ENCODE measurements at regions of chr1 and their contacts with region 1.

Region 1: DNA sequence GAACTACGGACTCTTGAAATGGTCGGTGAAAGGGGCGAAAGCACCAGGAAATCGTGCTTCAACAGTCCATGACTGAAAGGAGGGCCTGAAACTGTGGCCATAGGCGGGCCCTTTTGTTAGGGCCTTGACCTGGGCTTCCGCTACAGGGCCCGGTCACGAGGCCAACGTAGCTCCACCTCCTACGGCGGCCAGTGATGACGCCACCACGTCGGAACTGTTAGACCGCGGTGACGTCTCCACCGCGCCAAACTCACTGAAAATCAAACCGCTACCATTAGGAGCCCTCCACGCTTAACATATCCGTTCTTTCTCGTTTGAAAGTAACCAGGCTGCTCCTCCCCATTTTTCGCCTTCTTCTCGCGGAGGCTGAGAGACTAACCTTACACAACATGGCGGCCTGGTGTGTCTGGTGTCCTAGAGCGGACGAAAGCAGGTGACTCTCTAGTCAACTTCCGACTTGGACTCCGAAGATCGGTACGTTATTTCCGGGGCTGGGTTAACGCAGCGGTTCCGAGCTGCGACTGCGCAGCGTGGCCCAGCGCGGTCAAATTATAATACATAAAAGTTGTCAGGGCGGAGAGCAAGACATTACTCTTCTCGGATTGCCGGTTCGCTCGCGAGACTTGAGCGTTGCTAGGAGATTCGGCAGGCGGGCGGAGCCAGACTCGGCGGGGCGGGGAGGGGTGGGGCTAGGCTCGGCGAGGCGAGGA is 376 bp upstream of the CACYBP start:
- DNase-seq: peak; percentile 100
- H3K4me3 ChIP-seq: peak overlapping the region in 2 of 3 experiments; percentile 67 to 95
- H3K27ac ChIP-seq: peak overlapping the region; percentile 90
- H3K4me1 ChIP-seq: peaks cover 38% of the 10 kb centered on the region
- H3K27me3 ChIP-seq: no peaks in the 10 kb centered on the region
- CTCF ChIP-seq: no peak
- POLR2A ChIP-seq: peak; percentile 91

Region 2: DNA sequence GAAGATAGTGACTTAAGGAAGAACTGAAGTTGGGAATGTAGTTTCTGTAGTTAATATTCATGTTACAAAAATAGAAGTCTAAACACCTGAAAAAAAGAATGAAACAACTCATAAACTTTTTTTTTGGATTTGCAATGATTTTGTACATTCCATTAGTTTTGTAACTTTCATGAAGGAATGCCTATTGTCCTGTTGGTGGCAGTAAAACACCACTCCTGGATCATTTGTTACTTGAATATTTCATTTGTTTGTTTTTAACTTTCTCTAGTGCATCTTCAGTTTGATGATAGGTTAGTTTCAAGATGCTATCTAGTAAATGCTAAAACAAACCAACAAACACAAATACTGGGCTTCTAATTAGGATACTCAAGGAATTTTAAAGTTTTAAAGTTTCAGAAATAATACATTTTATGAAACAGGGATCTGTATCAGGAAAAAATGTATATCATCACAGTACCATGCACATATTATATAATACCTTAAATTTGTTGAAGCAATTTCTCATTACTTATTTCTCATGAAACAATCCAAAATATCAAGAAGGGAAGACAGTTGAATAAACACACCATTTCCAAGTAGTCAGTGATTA is 229.3 kb before region 1 on chr1:
- CTCF ChIA-PET with region 1: interaction called, 9 read pairs
- POLR2A ChIA-PET with region 1: no interaction called
- dilution Hi-C with region 1: no loop called
- intact Hi-C with region 1: loop called (anchors 1 kb)
- DNase-seq: peak; percentile 51
- H3K4me3 ChIP-seq: no peak overlapping the region
- H3K27ac ChIP-seq: no peak overlapping the region
- H3K4me1 ChIP-seq: no peaks in the 10 kb centered on the region
- H3K27me3 ChIP-seq: no peaks in the 10 kb centered on the region
- CTCF ChIP-seq: peak; percentile 48 to 50
- POLR2A ChIP-seq: no peak

Region 3: GRCh38 chr1:174789399-174789798 is 210.0 kb before region 1 on chr1:
- CTCF ChIA-PET with region 1: no interaction called
- POLR2A ChIA-PET with region 1: no interaction called
- dilution Hi-C with region 1: no loop called
- intact Hi-C with region 1: no loop called
- DNase-seq: no peak
- H3K4me3 ChIP-seq: no peak overlapping the region
- H3K27ac ChIP-seq: no peak overlapping the region
- H3K4me1 ChIP-seq: no peaks in the 10 kb centered on the region
- H3K27me3 ChIP-seq: no peaks in the 10 kb centered on the region
- CTCF ChIP-seq: no peak
- POLR2A ChIP-seq: no peak

Region 4: DNA sequence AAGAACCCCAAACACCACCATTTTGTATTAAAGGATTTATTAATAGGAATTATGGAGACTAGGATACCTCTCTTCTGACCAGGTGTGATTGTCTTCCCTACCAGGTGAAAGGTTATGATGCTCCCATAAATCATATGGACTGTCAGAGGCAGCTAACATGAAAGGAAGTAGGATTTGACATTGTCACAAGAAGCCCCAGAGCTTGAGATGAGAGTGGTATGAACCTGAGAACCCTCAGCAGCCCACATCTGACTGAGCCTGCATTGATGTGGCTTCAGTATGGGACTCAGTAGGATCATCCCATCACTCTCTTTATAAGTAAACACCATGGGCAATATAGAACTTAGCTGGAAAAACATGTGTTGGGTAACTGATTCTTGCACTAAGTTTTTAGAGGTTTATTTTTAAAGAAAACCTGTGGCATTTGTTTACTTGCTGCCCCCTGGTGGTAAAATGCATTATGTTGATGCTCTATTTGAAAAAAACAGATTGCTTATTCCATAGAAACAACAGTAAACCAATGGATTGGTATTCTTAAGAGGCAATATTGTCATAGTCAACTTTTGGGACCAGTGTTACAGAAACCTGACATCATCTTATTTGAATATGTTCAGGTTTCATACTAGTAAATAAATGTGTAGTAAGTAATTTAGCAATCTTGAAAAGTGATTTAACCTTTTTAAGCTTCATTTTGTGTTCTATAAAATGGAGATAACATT is 16.2 kb before region 1 on chr1:
- CTCF ChIA-PET with region 1: interaction called, 50 read pairs
- POLR2A ChIA-PET with region 1: interaction called, 3 read pairs
- dilution Hi-C with region 1: no loop called
- intact Hi-C with region 1: no loop called
- DNase-seq: peak; percentile 66
- H3K4me3 ChIP-seq: no peak overlapping the region
- H3K27ac ChIP-seq: no peak overlapping the region
- H3K4me1 ChIP-seq: no peaks in the 10 kb centered on the region
- H3K27me3 ChIP-seq: no peaks in the 10 kb centered on the region
- CTCF ChIP-seq: peak; percentile 44 to 49
- POLR2A ChIP-seq: no peak

Region 5: DNA sequence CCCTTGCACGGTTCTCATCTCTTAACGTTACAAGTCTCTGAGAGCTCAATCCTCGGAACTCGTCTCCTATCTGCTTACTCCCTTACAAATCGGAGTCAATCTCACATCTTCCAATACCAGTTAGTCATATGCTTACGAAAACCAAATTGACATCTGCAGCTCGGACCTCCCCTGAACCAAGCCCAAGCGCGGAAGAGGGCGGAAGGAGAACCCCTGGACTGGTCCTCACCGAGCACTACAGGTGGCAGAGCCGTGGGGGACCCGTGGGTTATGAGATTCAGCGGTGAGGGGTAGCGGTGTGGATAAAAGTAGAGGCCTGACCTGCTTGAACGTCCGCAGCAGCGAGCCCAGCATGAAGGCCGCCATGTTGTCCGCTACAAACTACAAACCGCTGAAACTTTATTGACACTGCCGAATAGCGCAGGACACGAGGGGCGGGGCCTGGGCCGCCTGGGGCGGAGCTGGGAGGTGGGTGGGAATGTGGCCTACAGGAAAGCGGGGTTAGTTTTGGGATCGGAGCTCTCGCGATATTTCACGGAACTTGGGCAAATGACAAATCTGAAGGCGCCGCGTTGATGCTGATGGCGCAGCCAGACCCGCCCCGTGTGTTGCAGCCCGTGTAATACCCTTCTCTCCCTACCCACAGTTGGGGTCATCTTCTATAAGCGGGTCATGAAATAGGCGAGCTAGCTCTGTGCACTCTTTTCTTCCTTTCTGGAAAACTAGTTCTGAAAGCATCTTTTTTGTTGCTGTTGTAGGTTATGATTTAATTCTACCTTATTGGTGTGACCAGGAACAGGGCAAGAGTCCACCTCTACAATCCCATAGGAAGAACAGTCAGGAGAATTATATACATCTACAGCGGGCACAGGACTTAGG is 23.9 kb after region 1 on chr1 and contains the start of gene MRPS14:
- CTCF ChIA-PET with region 1: interaction called, 4 read pairs
- POLR2A ChIA-PET with region 1: interaction called, 20 read pairs
- dilution Hi-C with region 1: no loop called
- intact Hi-C with region 1: loop called (anchors 1 kb)
- DNase-seq: peak; percentile 98
- H3K4me3 ChIP-seq: peak within 1 kb of the TSS; percentile 83 to 98 (median 96)
- H3K27ac ChIP-seq: peak within 1 kb of the TSS; percentile 68
- H3K4me1 ChIP-seq: peaks cover 12% of the 10 kb centered on the region
- H3K27me3 ChIP-seq: no peaks in the 10 kb centered on the region
- CTCF ChIP-seq: no peak
- POLR2A ChIP-seq: peak; percentile 77
- total RNA-seq, gene MRPS14: 31.6 and 31.8 TPM in 2 replicates

Region 6: GRCh38 chr1:175099916-175100315 is 100.5 kb after region 1 on chr1:
- CTCF ChIA-PET with region 1: no interaction called
- POLR2A ChIA-PET with region 1: no interaction called
- dilution Hi-C with region 1: no loop called
- intact Hi-C with region 1: no loop called
- DNase-seq: no peak
- H3K4me3 ChIP-seq: no peak overlapping the region
- H3K27ac ChIP-seq: no peak overlapping the region
- H3K4me1 ChIP-seq: no peaks in the 10 kb centered on the region
- H3K27me3 ChIP-seq: no peaks in the 10 kb centered on the region
- CTCF ChIP-seq: no peak
- POLR2A ChIP-seq: no peak

Measured in endothelial cell of umbilical vein (primary cell).